Activated B cell treated with CpG ODN at 0.5 μM for 24 hours (primary cell): ENCODE measurements at regions of chr3 and their contacts with region 1.

Region 1: GRCh38 chr3:195727606-195728195 is 6.9 kb downstream of the MUC20 start:
- DNase-seq: no peak
- ATAC-seq: peak; percentile 31
- H3K4me3 Mint-ChIP-seq: no peak overlapping the region
- H3K27ac Mint-ChIP-seq: no peak overlapping the region
- H3K4me1 Mint-ChIP-seq: peaks cover 11% of the 10 kb centered on the region
- H3K27me3 Mint-ChIP-seq: peaks cover 6% of the 10 kb centered on the region
- CTCF ChIP-seq: no peak

Region 2: GRCh38 chr3:195738274-195739044 is 10.8 kb after region 1 on chr3:
- CTCF ChIA-PET with region 1: no interaction called
- POLR2A ChIA-PET with region 1: no interaction called
- intact Hi-C with region 1: no loop called
- DNase-seq: no peak
- ATAC-seq: no peak
- H3K4me3 Mint-ChIP-seq: no peak overlapping the region
- H3K27ac Mint-ChIP-seq: no peak overlapping the region
- H3K4me1 Mint-ChIP-seq: no peaks in the 10 kb centered on the region
- H3K27me3 Mint-ChIP-seq: no peaks in the 10 kb centered on the region
- CTCF ChIP-seq: no peak

Region 3: DNA sequence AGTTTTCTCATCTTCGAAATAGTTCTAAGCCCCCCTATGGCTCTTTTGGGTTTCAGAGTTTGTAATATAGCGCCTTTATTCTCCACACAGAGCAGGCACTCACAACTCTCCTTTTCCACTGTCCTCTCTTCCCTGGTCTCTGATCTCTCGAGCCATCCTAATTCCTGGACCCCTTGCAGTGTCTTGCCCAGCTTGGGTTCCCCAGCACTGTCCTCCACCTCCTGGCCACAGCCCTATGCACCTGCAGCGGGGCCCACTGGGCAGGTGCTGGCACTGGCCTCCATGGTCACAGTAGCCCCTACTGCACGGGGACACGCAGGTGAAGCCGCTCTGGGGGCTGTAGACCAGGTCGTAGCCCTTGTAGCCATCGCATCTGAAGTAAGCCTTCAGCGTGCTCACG is 21.0 kb after region 1 on chr3:
- CTCF ChIA-PET with region 1: interaction called, 12 read pairs
- POLR2A ChIA-PET with region 1: interaction called, 6 read pairs
- intact Hi-C with region 1: loop called (anchors 1 kb)
- DNase-seq: no peak
- ATAC-seq: no peak
- H3K4me3 Mint-ChIP-seq: no peak overlapping the region
- H3K27ac Mint-ChIP-seq: no peak overlapping the region
- H3K4me1 Mint-ChIP-seq: peaks cover 13% of the 10 kb centered on the region
- H3K27me3 Mint-ChIP-seq: peaks cover 16% of the 10 kb centered on the region
- CTCF ChIP-seq: no peak